ENCODE measurements at regions of chr1 and their contacts with region 1.

Region 1: DNA sequence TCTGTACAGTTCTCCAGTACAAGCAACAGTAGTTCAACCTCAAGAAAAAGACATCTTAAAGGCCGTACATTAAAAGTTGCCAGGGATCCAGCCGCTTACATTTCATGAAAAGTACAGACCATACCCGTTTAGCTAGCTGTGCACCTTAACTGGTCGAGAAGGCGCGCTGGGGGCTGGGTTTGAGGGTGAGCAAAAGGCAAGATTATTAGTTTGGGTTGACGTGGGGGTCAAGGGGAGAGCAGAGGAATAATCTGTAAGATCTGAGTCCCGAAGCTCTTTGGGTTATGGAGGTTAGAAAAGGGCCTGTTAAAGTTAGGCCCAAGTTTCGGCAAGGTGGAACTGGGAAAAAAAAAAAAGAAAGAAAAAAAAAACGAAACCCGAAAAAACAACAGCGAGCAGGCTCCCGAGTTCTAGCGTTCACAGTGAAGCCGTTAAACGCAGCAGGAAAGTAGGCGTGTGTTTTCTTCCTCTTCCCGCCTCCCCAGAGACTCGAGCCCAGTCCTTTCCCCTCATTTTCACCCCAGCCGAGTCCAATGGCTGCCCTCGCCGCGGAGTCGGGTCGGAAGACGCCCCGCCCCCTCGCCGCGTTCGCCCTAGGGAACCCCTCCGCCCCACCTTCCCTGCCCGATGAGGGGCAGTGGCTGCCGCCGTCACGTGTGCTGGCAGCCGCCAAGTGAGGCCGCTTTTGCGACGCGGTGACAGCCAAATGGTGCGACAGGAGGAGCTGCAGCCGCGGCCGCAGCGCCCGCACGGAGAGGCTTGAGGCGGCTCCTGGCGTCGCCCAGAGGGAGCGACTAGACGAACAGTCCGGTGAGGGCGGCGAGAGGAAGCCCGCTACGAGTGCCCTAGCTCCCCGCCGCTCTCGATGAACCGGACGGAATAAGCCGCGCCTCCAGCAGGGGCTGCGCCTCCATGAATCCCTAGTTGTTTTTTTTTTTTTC is at the start of gene PKN2:
- DNase-seq: peak; percentile 99
- H3K4me3 Mint-ChIP-seq: peak within 1 kb of the TSS; percentile 86
- H3K27ac Mint-ChIP-seq: peak within 1 kb of the TSS; percentile 95
- H3K4me1 Mint-ChIP-seq: peaks cover 21% of the 10 kb centered on the region
- H3K27me3 Mint-ChIP-seq: peaks cover 2% of the 10 kb centered on the region
- total RNA-seq, gene PKN2: 24.1 and 25.1 TPM in 2 replicates

Region 2: DNA sequence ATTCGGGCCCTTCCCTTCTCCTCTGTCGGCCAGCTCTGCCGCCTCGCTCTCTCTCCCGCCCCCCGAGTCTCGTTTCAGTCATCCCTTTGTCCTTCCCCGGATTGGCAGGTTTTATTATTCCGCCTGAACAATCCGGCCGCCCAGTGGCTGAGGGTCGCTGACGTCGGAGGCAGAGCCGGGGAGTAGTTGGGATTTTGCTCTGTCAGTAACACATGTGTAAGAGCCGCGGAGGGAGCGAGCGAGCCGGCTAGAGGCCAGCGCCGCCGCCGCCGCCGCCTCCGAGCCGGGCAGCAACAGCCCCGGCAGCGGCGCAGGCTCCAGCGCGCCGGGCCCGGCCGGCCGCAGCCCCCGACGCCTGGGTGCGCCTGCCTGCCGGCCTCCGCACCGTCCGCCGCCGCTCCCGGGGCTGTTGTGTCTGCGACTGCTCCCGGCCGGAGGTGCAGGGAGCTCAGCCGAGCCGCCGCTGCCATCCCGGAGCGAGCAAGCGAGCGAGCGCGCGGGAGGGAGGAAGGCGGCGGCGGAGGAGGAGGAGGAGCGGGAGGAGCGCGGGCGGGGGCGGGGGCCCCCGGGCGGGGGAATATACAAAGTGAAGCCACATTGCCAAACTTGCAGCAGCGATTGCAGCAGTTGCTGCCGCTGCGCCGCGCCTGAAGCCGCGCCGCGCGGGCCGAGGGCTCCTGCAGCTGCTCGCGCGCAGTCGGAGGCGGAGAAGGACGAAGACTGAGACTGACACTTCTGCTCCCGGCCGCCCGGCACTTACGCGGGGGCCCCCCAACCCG is 1355.3 kb before region 1 on chr1 and contains the start of gene LMO4:
- intact Hi-C with region 1: loop called (anchors 5 kb)
- DNase-seq: peak; percentile 94
- H3K4me3 Mint-ChIP-seq: peak within 1 kb of the TSS; percentile 89
- H3K27ac Mint-ChIP-seq: peak within 1 kb of the TSS; percentile 94
- H3K4me1 Mint-ChIP-seq: peaks cover 35% of the 10 kb centered on the region
- H3K27me3 Mint-ChIP-seq: peaks cover 9% of the 10 kb centered on the region
- total RNA-seq, gene LMO4: 23.7 and 26.1 TPM in 2 replicates

Region 3: GRCh38 chr1:88371396-88371795 is 312.4 kb before region 1 on chr1:
- intact Hi-C with region 1: no loop called
- DNase-seq: no peak
- H3K4me3 Mint-ChIP-seq: no peak overlapping the region
- H3K27ac Mint-ChIP-seq: no peak overlapping the region
- H3K4me1 Mint-ChIP-seq: no peaks in the 10 kb centered on the region
- H3K27me3 Mint-ChIP-seq: no peaks in the 10 kb centered on the region

Region 4: DNA sequence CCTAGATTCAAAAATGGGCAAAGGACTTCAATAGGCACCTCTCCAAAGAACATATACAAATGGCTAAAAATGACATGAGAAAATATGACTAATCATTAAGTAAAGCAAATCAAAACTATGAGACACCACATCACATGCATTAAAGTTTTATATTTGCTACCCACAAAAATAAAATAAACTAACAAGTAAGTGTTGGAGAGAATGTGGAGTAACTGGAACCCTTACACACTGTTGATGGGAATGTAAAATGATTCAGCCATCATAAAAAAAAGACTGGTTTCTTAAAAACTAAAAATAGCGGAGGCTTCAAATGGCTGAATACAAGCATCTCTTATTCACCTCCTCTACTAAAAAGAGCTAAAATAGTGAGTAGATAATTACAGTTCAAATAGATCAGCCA is 261.8 kb before region 1 on chr1:
- intact Hi-C with region 1: no loop called
- DNase-seq: no peak
- H3K4me3 Mint-ChIP-seq: no peak overlapping the region
- H3K27ac Mint-ChIP-seq: no peak overlapping the region
- H3K4me1 Mint-ChIP-seq: no peaks in the 10 kb centered on the region
- H3K27me3 Mint-ChIP-seq: no peaks in the 10 kb centered on the region

Region 5: GRCh38 chr1:88655685-88656299 is 28.0 kb before region 1 on chr1:
- intact Hi-C with region 1: loop called (anchors 1 kb)
- DNase-seq: no peak
- H3K4me3 Mint-ChIP-seq: no peak overlapping the region
- H3K27ac Mint-ChIP-seq: no peak overlapping the region
- H3K4me1 Mint-ChIP-seq: peaks cover 8% of the 10 kb centered on the region
- H3K27me3 Mint-ChIP-seq: peaks cover under 1% of the 10 kb centered on the region

Region 6: GRCh38 chr1:88661951-88662699 is 21.7 kb before region 1 on chr1:
- intact Hi-C with region 1: loop called (anchors 1 kb)
- DNase-seq: no peak
- H3K4me3 Mint-ChIP-seq: no peak overlapping the region
- H3K27ac Mint-ChIP-seq: no peak overlapping the region
- H3K4me1 Mint-ChIP-seq: peaks cover 22% of the 10 kb centered on the region
- H3K27me3 Mint-ChIP-seq: peaks cover 8% of the 10 kb centered on the region

Region 7: GRCh38 chr1:88670462-88670861 is 13.3 kb before region 1 on chr1:
- intact Hi-C with region 1: loop called (anchors 1 kb)
- DNase-seq: no peak
- H3K4me3 Mint-ChIP-seq: no peak overlapping the region
- H3K27ac Mint-ChIP-seq: no peak overlapping the region
- H3K4me1 Mint-ChIP-seq: no peaks in the 10 kb centered on the region
- H3K27me3 Mint-ChIP-seq: peaks cover 46% of the 10 kb centered on the region

Region 8: GRCh38 chr1:88773540-88774150 is 89.8 kb after region 1 on chr1:
- intact Hi-C with region 1: loop called (anchors 5 kb)
- DNase-seq: no peak
- H3K4me3 Mint-ChIP-seq: no peak overlapping the region
- H3K27ac Mint-ChIP-seq: peak overlapping the region; percentile 81
- H3K4me1 Mint-ChIP-seq: peaks cover 16% of the 10 kb centered on the region
- H3K27me3 Mint-ChIP-seq: no peaks in the 10 kb centered on the region

Region 9: DNA sequence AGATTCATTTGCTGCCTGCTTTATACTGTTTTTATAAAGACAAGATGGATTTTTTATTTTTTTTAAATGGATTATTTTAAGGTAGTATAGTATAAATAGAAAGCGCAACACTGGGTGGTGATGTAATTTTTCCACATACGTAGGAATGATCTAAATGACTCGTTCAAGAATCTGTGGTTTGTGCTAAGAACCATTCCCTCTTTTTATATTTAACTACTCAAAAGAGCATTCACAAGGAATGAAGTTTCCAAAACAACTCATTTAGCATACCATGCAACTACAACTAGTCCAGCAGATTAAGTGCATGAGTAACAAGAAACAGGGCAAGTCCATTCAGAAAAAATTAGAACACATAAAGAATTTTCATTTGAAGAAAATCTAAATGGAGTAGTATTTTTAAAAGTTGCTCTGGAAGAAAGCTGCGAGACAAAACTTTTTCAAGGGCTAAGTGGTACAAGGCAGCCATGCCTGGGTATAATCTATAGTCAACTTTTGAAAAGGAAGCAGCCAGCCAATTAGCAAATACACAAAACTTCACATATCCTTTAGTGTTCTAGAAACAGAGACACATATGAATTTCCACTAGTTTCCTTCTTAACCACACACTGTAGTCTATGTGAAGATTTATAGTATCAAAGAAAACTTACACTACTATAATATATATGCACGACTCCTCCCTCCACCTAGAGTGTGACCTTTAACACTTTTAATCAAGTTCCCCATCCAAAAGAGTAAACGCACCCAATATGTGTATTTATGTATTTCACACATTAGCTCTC is 184.1 kb after region 1 on chr1:
- intact Hi-C with region 1: no loop called
- DNase-seq: no peak
- H3K4me3 Mint-ChIP-seq: peak overlapping the region; percentile 69
- H3K27ac Mint-ChIP-seq: peak overlapping the region; percentile 82
- H3K4me1 Mint-ChIP-seq: peaks cover 36% of the 10 kb centered on the region
- H3K27me3 Mint-ChIP-seq: no peaks in the 10 kb centered on the region

Region 10: DNA sequence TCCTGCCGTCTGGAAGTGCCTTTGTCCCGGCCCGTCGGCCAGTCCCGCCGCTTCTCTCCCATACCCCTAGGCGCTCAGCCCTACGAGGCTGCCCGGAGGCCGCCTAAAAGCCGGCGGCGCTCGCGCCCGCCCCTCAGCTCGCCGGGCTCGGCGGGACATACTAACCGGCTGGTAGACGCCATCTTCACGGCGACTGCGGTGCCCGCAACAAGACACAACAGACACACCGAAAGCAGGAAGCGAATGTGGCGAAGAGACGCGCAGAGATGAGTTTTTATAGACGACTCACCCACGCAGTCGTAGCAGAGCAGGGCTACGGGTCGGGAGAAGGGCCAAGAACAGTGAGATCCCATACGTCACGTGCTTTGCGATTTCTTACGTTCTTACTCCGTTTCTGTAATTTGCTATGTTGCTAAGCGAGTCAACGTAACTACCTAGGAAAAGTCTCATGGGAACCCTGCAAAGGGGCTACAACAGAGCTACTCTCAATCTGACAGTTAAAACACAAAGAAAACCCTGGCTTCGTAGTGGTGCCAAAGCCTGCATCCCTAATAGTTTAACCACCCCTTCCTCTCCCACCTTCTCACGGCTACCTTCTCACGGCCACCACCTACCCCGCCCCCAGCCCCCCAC is 207.6 kb after region 1 on chr1 and contains the start of gene GTF2B:
- intact Hi-C with region 1: loop called (anchors 1 kb)
- DNase-seq: peak; percentile 98
- H3K4me3 Mint-ChIP-seq: peak within 1 kb of the TSS; percentile 91
- H3K27ac Mint-ChIP-seq: peak within 1 kb of the TSS; percentile 98
- H3K4me1 Mint-ChIP-seq: peaks cover 37% of the 10 kb centered on the region
- H3K27me3 Mint-ChIP-seq: peaks cover 6% of the 10 kb centered on the region
- total RNA-seq, gene GTF2B: 41.2 and 42.2 TPM in 2 replicates

Measured in activated CD4-positive, alpha-beta T cell treated with anti-CD3 and anti-CD28 coated beads, Interleukin-2, amount 10 ng/mL, durations not matched to agents 24 days and 14 days (primary cell).